ENCODE measurements at regions of chr14 and their contacts with region 1.

Region 1: GRCh38 chr14:34714320-34715126 is at the start of gene CFL2:
- DNase-seq: peak; percentile 89 to 93 (median 92)
- ATAC-seq: peak; percentile 73 to 98 (median 91)
- H3K4me3 ChIP-seq: peak within 1 kb of the TSS; percentile 67 to 95 (median 88)
- H3K27ac ChIP-seq: peak within 1 kb of the TSS; percentile 93 to 100 (median 98)
- H3K4me1 ChIP-seq: peaks cover 0 to 49% (median 23%) of the 10 kb centered on the region in 12 donors
- H3K27me3 ChIP-seq: no peaks in the 10 kb centered on the region
- CTCF ChIP-seq: no peak
- POLR2A ChIP-seq: peak; percentile 48 to 81
- total RNA-seq, gene CFL2: 381 to 1,097 (median 604) TPM

Region 2: GRCh38 chr14:34489353-34489752 is 225.2 kb before region 1 on chr14:
- intact Hi-C with region 1: no loop called
- DNase-seq: no peak
- ATAC-seq: no peak
- H3K4me3 ChIP-seq: no peak overlapping the region
- H3K27ac ChIP-seq: no peak overlapping the region
- H3K4me1 ChIP-seq: no peaks in the 10 kb centered on the region
- H3K27me3 ChIP-seq: no peaks in the 10 kb centered on the region
- CTCF ChIP-seq: no peak
- POLR2A ChIP-seq: no peak

Region 3: GRCh38 chr14:34629657-34630529 is 84.6 kb before region 1 on chr14 and contains the start of gene SNX6:
- intact Hi-C with region 1: loop called in 2 of 10 experiments (anchors 2 to 5 kb)
- DNase-seq: peak; percentile 85 to 92 (median 88)
- ATAC-seq: peak; percentile 88 to 99 (median 98)
- H3K4me3 ChIP-seq: peak within 1 kb of the TSS; percentile 75 to 99 (median 88)
- H3K27ac ChIP-seq: peak within 1 kb of the TSS; percentile 92 to 99 (median 96)
- H3K4me1 ChIP-seq: peaks cover 0 to 49% (median 10%) of the 10 kb centered on the region in 12 donors
- H3K27me3 ChIP-seq: no peaks in the 10 kb centered on the region
- CTCF ChIP-seq: no peak
- POLR2A ChIP-seq: peak in 1 of 2 donors; percentile 73
- total RNA-seq, gene SNX6: 52.4 to 103 (median 64.3) TPM

Region 4: DNA sequence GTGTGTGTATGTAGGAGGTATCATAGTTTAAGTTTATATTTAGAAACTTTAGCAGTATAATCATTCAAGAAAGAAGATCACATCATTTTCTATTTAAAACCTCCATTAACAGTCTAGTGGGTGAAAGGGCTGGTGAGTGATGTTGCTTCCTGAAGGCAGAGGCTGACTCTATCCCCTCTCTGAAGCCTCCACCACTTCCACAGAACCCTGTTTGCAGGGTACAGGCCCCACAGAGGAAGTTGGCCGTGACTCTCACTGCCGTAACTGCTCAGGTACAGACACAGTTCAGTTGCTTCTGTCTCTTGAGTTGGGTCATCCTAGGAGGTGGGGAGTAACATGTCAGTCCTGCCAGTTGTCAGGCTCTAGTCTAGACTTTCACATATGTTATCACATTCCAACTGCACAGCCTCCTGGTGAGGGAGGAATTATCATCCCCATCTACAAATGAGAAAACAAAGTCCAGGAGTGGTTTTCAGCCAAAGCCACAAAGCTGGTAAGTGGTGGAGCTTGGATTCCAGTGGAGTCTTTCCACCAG is 31.7 kb before region 1 on chr14:
- intact Hi-C with region 1: loop called in 1 of 10 experiments (anchors 5 kb)
- DNase-seq: peak in 1 of 5 donors; percentile 30
- ATAC-seq: peak; percentile 73 to 94 (median 87)
- H3K4me3 ChIP-seq: peak overlapping the region in 2 of 12 donors; percentile 13 to 15
- H3K27ac ChIP-seq: peak overlapping the region in 6 of 12 donors; percentile 12 to 79 (median 58)
- H3K4me1 ChIP-seq: peaks cover 0 to 7% (median 0%) of the 10 kb centered on the region in 12 donors
- H3K27me3 ChIP-seq: peaks cover 0 to 5% (median 0%) of the 10 kb centered on the region in 9 donors
- CTCF ChIP-seq: no peak
- POLR2A ChIP-seq: no peak

Region 5: DNA sequence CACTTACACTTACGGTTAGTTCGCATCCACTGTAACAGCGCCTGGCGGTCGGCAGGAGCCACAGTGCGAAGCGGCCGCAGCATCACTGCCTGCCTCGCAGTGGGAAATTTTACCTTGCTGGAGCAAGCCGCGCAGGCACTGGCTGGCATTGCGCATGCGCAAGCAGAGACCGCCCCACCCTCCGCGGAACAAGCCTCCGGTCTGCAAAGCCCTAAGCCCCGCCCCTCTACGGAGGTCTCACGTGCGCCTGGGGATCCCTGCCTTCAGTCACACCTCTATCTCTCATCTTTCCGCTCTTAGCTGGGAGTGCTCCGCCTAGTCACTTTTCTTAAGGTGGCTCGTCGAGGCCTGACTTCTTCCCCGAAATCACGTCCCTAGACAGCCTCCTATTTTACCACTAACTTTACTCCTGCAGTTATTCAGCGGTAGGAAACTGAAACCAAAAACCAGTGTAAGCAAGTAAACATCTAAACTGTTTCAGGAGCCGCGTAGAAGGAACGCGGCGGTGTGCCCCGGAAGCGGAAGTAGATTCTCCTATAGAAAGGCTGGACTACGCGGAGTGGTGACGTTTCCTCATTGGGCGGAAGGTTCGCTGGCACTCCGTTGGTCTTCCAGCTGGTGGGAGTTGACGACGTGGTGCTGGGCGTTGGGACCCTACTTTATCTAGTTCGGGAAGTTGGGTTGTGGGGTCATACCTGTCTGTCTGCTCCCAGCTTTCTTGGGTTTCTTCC is 268.1 kb after region 1 on chr14 and contains the start of gene SRP54:
- intact Hi-C with region 1: loop called in 1 of 10 experiments (anchors 5 kb)
- DNase-seq: peak; percentile 98 to 99 (median 99)
- ATAC-seq: peak; percentile 97 to 99 (median 97)
- H3K4me3 ChIP-seq: peak within 1 kb of the TSS; percentile 66 to 99 (median 86)
- H3K27ac ChIP-seq: peak within 1 kb of the TSS; percentile 90 to 100 (median 96)
- H3K4me1 ChIP-seq: peaks cover 7 to 44% (median 29%) of the 10 kb centered on the region in 12 donors
- H3K27me3 ChIP-seq: no peaks in the 10 kb centered on the region
- CTCF ChIP-seq: peak in 4 of 12 donors; percentile 3 to 21 (median 9)
- POLR2A ChIP-seq: peak in 1 of 2 donors; percentile 83
- total RNA-seq, gene SRP54: 29.0 to 37.3 (median 34.0) TPM

Region 6: GRCh38 chr14:35046048-35046741 is 331.7 kb after region 1 on chr14 and contains the start of gene FAM177A1:
- intact Hi-C with region 1: loop called in 1 of 10 experiments (anchors 5 kb)
- DNase-seq: peak; percentile 97 to 99 (median 99)
- ATAC-seq: peak; percentile 96 to 98 (median 98)
- H3K4me3 ChIP-seq: peak within 1 kb of the TSS; percentile 62 to 95 (median 84)
- H3K27ac ChIP-seq: peak within 1 kb of the TSS; percentile 91 to 99 (median 96)
- H3K4me1 ChIP-seq: peaks cover 0 to 43% (median 27%) of the 10 kb centered on the region in 12 donors
- H3K27me3 ChIP-seq: no peaks in the 10 kb centered on the region
- CTCF ChIP-seq: no peak
- POLR2A ChIP-seq: peak; percentile 74 to 96
- total RNA-seq, gene FAM177A1: 56.3 to 129 (median 98.8) TPM